ENCODE measurements at regions of chr1 and their contacts with region 1.

Region 1: DNA sequence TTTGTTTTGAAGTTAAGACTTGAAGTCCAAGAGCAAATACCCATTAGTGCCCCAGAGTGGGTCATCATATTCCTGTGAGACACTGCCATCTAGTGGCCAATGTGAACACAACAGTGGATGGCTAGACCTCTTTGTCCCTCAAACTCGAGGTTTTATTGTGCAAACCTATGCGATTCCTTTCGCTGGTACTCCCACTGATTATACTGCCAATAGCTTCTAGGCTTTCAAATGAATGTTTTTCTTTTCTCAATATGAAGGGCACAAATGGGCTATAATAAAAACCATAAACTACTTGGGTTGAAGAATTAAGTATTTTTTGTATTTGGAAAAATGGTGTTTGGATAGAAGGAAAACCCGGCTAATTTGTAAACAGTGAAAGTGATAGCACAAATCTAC is 100.4 kb upstream of the ZNF281 start:
- DNase-seq: peak; percentile 78
- ATAC-seq: peak; percentile 98
- H3K4me3 ChIP-seq: no peak overlapping the region
- H3K27ac ChIP-seq: no peak overlapping the region
- H3K4me1 ChIP-seq: peaks cover 11% of the 10 kb centered on the region; the same call in 1 of the 2 replicates
- H3K27me3 ChIP-seq: peaks cover 0 to 10% of the 10 kb centered on the region in 2 experiments; a peak in 3 of 5 replicates
- CTCF ChIP-seq: peak; percentile 88
- EP300 ChIP-seq: no peak
- POLR2A ChIP-seq: no peak
- RAD21 ChIP-seq: peak; percentile 74

Region 2: DNA sequence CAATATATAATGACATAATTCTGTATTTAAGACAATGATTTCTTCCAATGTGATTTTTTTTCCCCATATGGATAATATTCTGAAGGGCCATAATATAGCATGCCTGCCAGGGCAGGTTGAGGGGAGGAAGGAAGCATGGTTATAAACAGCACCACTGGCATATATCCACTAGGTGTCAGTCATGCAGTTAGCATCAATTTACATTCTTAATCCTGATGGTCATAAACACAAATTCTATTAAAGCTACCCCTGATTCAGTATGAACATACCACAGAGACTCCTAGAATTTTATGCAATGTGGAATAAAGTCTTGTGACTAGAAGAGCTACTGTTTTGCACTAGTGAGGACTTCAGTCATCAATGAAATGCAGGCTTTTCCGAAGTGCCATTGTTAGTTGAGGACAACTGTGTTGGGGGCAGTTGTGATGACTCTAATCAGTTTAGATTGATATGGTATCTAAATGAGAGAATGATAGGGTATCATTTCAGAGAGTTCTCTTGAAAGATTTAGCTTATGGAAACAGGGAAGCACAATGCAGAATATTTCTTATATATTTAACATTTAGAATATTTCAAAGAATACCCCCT is 825.4 kb before region 1 on chr1:
- CTCF ChIA-PET with region 1: interaction called, 8 read pairs
- POLR2A ChIA-PET with region 1: no interaction called
- in situ Hi-C with region 1: loop called (anchors 10 kb)
- intact Hi-C with region 1: no loop called
- DNase-seq: peak; percentile 25
- ATAC-seq: peak; percentile 91
- H3K4me3 ChIP-seq: no peak overlapping the region
- H3K27ac ChIP-seq: no peak overlapping the region
- H3K4me1 ChIP-seq: no peaks in the 10 kb centered on the region
- H3K27me3 ChIP-seq: no peaks in the 10 kb centered on the region; a peak in 1 of 5 replicates
- CTCF ChIP-seq: peak; percentile 77
- EP300 ChIP-seq: no peak
- POLR2A ChIP-seq: no peak
- RAD21 ChIP-seq: peak; percentile 40

Region 3: GRCh38 chr1:199954699-199955098 is 555.5 kb before region 1 on chr1:
- CTCF ChIA-PET with region 1: interaction called, 10 read pairs
- POLR2A ChIA-PET with region 1: no interaction called
- in situ Hi-C with region 1: no loop called
- intact Hi-C with region 1: loop called (anchors 1 kb)
- DNase-seq: peak; percentile 10
- ATAC-seq: peak; percentile 99
- H3K4me3 ChIP-seq: no peak overlapping the region
- H3K27ac ChIP-seq: no peak overlapping the region
- H3K4me1 ChIP-seq: no peaks in the 10 kb centered on the region
- H3K27me3 ChIP-seq: no peaks in the 10 kb centered on the region
- CTCF ChIP-seq: peak; percentile 72
- EP300 ChIP-seq: no peak
- POLR2A ChIP-seq: no peak
- RAD21 ChIP-seq: no peak

Region 4: DNA sequence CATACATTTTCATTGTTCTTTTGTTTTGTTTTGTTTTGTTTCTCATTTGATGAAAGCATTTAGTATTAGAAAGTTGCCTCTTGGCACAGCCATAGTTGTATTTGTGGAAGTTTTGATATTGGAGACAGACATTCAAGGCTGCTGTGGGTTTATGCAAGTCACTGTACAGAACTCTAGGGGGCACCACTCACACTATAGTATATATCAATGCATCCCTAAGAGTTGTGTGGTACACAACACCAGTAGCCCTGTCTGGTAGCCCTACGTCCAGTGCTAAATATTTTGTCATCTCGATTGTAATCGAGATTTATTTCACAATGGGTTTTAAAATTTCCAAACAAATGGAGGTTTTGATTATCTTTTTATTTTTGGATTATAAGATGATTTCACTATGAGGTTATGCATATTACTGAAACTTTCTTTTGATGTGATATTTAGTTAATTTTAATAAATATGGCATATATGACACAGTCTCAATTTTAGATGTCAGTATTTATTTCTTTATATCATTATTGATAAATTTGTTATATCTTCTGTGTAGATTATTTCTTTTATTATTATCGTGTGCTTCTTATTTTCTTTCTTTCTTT is 370.5 kb before region 1 on chr1:
- CTCF ChIA-PET with region 1: interaction called, 15 read pairs
- POLR2A ChIA-PET with region 1: no interaction called
- in situ Hi-C with region 1: loop called (anchors 10 kb)
- intact Hi-C with region 1: loop called (anchors 1 kb)
- DNase-seq: peak; percentile 61
- ATAC-seq: peak; percentile 94
- H3K4me3 ChIP-seq: no peak overlapping the region
- H3K27ac ChIP-seq: no peak overlapping the region
- H3K4me1 ChIP-seq: no peaks in the 10 kb centered on the region
- H3K27me3 ChIP-seq: no peaks in the 10 kb centered on the region; a peak in 1 of 5 replicates
- CTCF ChIP-seq: peak; percentile 73
- EP300 ChIP-seq: no peak
- POLR2A ChIP-seq: no peak
- RAD21 ChIP-seq: 0 out of 2 replicates have a peak, but pooled peaks have one; percentile 17

Region 5: GRCh38 chr1:200473698-200474371 is 36.4 kb before region 1 on chr1:
- CTCF ChIA-PET with region 1: no interaction called
- POLR2A ChIA-PET with region 1: no interaction called
- in situ Hi-C with region 1: no loop called
- intact Hi-C with region 1: no loop called
- DNase-seq: no peak
- ATAC-seq: no peak
- H3K4me3 ChIP-seq: no peak overlapping the region
- H3K27ac ChIP-seq: no peak overlapping the region
- H3K4me1 ChIP-seq: peaks cover 16% of the 10 kb centered on the region
- H3K27me3 ChIP-seq: peaks cover 2 to 9% of the 10 kb centered on the region in 2 experiments; a peak in 3 of 5 replicates
- CTCF ChIP-seq: no peak
- EP300 ChIP-seq: no peak
- POLR2A ChIP-seq: no peak
- RAD21 ChIP-seq: no peak

Measured in HepG2 (cell line).